ENCODE measurements at regions of chr4 and their contacts with region 1.

Region 1: DNA sequence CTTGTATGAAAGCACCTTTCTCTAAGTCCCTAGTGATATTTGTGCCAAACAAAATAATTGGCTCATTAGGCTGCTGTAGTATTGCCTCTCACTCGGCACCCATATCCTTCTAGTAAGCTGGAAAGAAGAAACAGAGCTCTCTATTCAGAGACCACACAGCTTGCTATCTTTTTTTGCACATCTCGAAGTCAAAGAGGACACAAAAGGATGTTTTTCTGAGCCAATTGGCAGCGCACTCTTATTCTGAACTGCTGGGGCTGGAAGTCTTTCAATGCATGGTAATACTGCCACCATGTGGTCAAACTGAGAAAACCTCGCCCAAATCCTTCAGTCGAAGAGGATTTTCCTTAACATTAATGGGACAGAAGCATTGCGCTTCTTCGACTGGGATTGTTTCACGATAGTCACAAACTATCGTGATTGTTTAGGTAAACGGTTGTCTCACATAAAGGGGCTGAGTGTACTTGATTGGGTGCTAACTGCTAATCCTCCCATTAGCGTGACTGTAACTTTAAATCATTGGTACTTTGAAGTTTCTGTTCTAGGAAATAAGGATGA is 572.0 kb upstream of the LCORL start:
- DNase-seq: peak in 1 of 3 donors; percentile 19
- ATAC-seq: peak; percentile 38 to 47
- H3K4me3 ChIP-seq: no peak overlapping the region
- H3K27ac ChIP-seq: no peak overlapping the region
- H3K4me1 ChIP-seq: no peaks in the 10 kb centered on the region
- H3K27me3 ChIP-seq: no peaks in the 10 kb centered on the region

Region 2: GRCh38 chr4:17544831-17545234 is 1048.7 kb before region 1 on chr4:
- intact Hi-C with region 1: loop called in 3 of 4 experiments (anchors 5 to 10 kb)
- DNase-seq: no peak
- ATAC-seq: no peak
- H3K4me3 ChIP-seq: no peak overlapping the region
- H3K27ac ChIP-seq: no peak overlapping the region
- H3K4me1 ChIP-seq: no peaks in the 10 kb centered on the region
- H3K27me3 ChIP-seq: no peaks in the 10 kb centered on the region

Region 3: GRCh38 chr4:17552427-17552826 is 1041.1 kb before region 1 on chr4:
- intact Hi-C with region 1: loop called in 3 of 4 experiments (anchors 5 to 10 kb)
- DNase-seq: no peak
- ATAC-seq: no peak
- H3K4me3 ChIP-seq: no peak overlapping the region
- H3K27ac ChIP-seq: no peak overlapping the region
- H3K4me1 ChIP-seq: no peaks in the 10 kb centered on the region
- H3K27me3 ChIP-seq: no peaks in the 10 kb centered on the region

Region 4: GRCh38 chr4:17817020-17817419 is 776.5 kb before region 1 on chr4:
- intact Hi-C with region 1: loop called in 2 of 4 experiments (anchors 5 kb)
- DNase-seq: no peak
- ATAC-seq: peak; percentile 31 to 52
- H3K4me3 ChIP-seq: no peak overlapping the region
- H3K27ac ChIP-seq: no peak overlapping the region
- H3K4me1 ChIP-seq: no peaks in the 10 kb centered on the region
- H3K27me3 ChIP-seq: no peaks in the 10 kb centered on the region

Region 5: DNA sequence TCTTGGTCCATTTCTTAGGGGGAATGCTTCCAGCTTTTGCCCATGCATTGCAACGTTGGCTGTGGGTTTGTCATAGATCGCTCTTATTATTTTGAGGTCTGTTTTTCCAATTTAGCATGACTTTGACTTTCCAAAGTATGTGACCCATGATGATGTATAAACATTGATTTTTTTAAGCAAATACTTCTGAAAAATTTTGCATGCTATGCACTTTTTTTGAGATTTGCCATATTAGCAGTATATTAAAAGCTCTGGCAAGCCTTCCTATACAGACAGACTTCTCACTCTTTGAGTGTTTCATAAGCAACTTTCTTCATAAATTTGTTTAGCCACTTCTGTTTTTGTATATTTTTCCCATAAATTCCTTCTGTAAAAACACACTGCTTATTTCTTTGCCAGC is 174.4 kb after region 1 on chr4:
- intact Hi-C with region 1: no loop called
- DNase-seq: no peak
- ATAC-seq: no peak
- H3K4me3 ChIP-seq: no peak overlapping the region
- H3K27ac ChIP-seq: no peak overlapping the region
- H3K4me1 ChIP-seq: no peaks in the 10 kb centered on the region
- H3K27me3 ChIP-seq: no peaks in the 10 kb centered on the region

Region 6: GRCh38 chr4:19014594-19014993 is 421.1 kb after region 1 on chr4:
- intact Hi-C with region 1: no loop called
- DNase-seq: no peak
- ATAC-seq: no peak
- H3K4me3 ChIP-seq: no peak overlapping the region
- H3K27ac ChIP-seq: no peak overlapping the region
- H3K4me1 ChIP-seq: no peaks in the 10 kb centered on the region
- H3K27me3 ChIP-seq: no peaks in the 10 kb centered on the region